ENCODE measurements at regions of chr9 and their contacts with region 1.

Region 1: DNA sequence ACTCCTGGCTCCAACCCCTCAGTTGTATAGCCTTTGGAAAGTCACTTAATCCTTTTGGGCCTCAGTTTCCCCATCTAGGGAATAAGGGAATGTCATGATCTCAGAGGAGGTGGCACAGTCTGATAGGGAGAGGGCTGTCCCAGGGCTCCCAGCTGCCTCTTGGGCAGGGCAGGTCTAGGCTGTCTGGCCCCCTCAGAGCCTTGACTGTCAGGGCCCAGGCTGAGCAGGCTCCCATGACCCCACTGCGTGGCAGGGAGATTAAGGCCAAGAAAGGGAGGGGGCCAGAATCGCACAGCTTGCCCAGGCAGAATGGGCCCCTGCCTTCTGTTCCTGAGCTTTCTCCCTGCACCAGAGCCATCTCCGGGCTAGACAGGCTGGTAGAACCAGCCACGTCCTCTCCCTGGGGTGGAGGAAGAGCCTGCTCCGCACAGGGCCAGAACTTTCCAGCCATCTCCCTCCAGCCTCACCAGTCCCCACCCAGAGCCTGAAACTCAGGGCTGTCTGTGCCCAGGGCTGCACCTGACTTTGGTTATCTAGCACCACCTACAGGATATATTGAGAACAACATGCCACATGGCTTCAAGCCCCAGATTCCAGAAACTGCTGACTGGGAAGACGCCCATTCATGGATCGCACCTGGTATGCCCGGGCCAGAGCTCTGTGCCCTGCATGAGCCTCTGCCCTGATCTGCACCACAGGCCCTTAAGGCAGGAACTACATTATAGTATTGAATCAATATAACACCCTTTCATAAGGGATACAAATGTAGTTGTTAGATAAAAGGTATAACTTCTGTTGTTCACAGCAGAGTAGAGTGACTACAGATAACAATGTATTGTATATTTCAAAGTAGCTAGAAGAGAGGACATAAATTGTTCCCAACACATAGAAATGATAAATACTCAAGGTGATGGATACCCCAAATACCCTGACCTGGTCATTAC is 32.0 kb downstream of the NAIF1 start:
- DNase-seq: peak; percentile 36 to 80 (median 75)
- H3K4me3 ChIP-seq: no peak overlapping the region
- H3K4me3 Mint-ChIP-seq: peak overlapping the region; percentile 35 to 66 (median 52)
- H3K27ac ChIP-seq: no peak overlapping the region
- H3K27ac Mint-ChIP-seq: peak overlapping the region; percentile 81 to 94 (median 87)
- H3K4me1 ChIP-seq: peaks cover 45% of the 10 kb centered on the region
- H3K4me1 Mint-ChIP-seq: peaks cover 31 to 43% (median 36%) of the 10 kb centered on the region in 3 donors
- H3K27me3 ChIP-seq: no peaks in the 10 kb centered on the region
- H3K27me3 Mint-ChIP-seq: no peaks in the 10 kb centered on the region

Region 2: DNA sequence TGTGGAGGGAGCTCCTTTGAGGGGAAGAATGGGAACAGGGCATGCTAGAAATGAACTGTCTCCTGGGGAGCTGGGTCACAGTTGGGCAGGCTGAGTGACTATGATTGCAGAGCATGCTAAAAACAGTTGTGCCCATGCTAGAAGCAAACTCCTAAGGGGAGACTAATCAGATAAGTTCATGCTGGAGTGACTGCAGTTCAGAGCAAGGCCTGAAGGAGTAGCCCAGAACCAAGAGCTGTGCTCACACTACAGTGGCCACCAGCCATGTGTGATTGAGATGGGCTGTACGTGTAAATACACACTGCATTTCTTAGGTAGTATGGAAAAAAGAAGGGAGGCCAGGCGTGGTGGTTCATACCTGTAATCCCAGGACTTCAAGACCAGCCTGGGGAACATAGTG is 147.3 kb before region 1 on chr9:
- CTCF ChIA-PET with region 1: no interaction called
- POLR2A ChIA-PET with region 1: no interaction called
- DNase-seq: no peak
- H3K4me3 ChIP-seq: no peak overlapping the region
- H3K4me3 Mint-ChIP-seq: no peak overlapping the region
- H3K27ac ChIP-seq: no peak overlapping the region
- H3K27ac Mint-ChIP-seq: peak overlapping the region in 2 of 8 donors; percentile 60 to 70
- H3K4me1 ChIP-seq: no peaks in the 10 kb centered on the region
- H3K4me1 Mint-ChIP-seq: peaks cover 9 to 39% (median 12%) of the 10 kb centered on the region in 3 donors
- H3K27me3 ChIP-seq: no peaks in the 10 kb centered on the region
- H3K27me3 Mint-ChIP-seq: peaks cover 0 to 1% of the 10 kb centered on the region in 2 donors

Region 3: GRCh38 chr9:127916665-127917613 is 118.2 kb before region 1 on chr9 and contains the start of gene ST6GALNAC4:
- CTCF ChIA-PET with region 1: interaction called, 16 read pairs
- POLR2A ChIA-PET with region 1: interaction called, 4 read pairs
- DNase-seq: peak; percentile 89 to 96 (median 94)
- H3K4me3 ChIP-seq: peak within 1 kb of the TSS; percentile 94
- H3K4me3 Mint-ChIP-seq: peak within 1 kb of the TSS; percentile 82 to 94 (median 89)
- H3K27ac ChIP-seq: peak within 1 kb of the TSS; percentile 81
- H3K27ac Mint-ChIP-seq: peak within 1 kb of the TSS; percentile 53 to 95 (median 93)
- H3K4me1 ChIP-seq: peaks cover 52% of the 10 kb centered on the region
- H3K4me1 Mint-ChIP-seq: peaks cover 40 to 66% (median 45%) of the 10 kb centered on the region in 3 donors
- H3K27me3 ChIP-seq: no peaks in the 10 kb centered on the region
- H3K27me3 Mint-ChIP-seq: peaks cover 0 to 7% of the 10 kb centered on the region in 2 donors
- total RNA-seq, gene ST6GALNAC4: 32.9 to 43.2 TPM

Region 4: DNA sequence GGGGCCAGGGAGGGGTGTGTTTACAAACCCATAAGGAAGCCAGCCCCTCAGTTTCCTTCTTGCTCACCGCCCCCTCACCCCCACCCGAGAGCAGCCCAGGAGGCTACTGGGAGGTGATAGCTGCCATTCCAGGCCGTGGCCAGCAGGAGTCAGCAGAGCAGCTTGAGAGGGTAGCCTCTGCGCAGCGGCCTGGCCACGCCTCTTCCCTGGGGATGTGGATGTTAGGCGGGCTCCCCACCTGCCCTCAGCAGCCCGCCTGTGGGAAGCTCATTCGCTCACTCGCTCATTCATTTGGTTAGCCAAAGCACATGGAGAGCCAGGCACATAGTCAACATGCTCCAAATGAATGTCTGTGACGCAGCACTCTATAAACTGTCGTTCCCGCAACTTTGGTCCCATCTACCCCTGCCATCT is 91.4 kb before region 1 on chr9:
- CTCF ChIA-PET with region 1: interaction called, 485 read pairs
- POLR2A ChIA-PET with region 1: interaction called, 6 read pairs
- DNase-seq: peak; percentile 62 to 82 (median 66)
- H3K4me3 ChIP-seq: no peak overlapping the region
- H3K4me3 Mint-ChIP-seq: peak overlapping the region in 3 of 7 donors; percentile 17 to 36 (median 18)
- H3K27ac ChIP-seq: no peak overlapping the region
- H3K27ac Mint-ChIP-seq: peak overlapping the region in 7 of 8 donors; percentile 30 to 83 (median 66)
- H3K4me1 ChIP-seq: peaks cover 32% of the 10 kb centered on the region
- H3K4me1 Mint-ChIP-seq: peaks cover 15 to 36% (median 21%) of the 10 kb centered on the region in 3 donors
- H3K27me3 ChIP-seq: no peaks in the 10 kb centered on the region
- H3K27me3 Mint-ChIP-seq: no peaks in the 10 kb centered on the region

Region 5: GRCh38 chr9:127970401-127971313 is 64.4 kb before region 1 on chr9:
- CTCF ChIA-PET with region 1: interaction called, 485 read pairs
- POLR2A ChIA-PET with region 1: interaction called, 11 read pairs
- DNase-seq: peak; percentile 36 to 84 (median 75)
- H3K4me3 ChIP-seq: peak overlapping the region; percentile 70
- H3K4me3 Mint-ChIP-seq: peak overlapping the region; percentile 85 to 99 (median 95)
- H3K27ac ChIP-seq: peak overlapping the region; percentile 55
- H3K27ac Mint-ChIP-seq: peak overlapping the region; percentile 87 to 100 (median 98)
- H3K4me1 ChIP-seq: peaks cover 99% of the 10 kb centered on the region
- H3K4me1 Mint-ChIP-seq: peaks cover 95 to 100% (median 100%) of the 10 kb centered on the region in 3 donors
- H3K27me3 ChIP-seq: no peaks in the 10 kb centered on the region
- H3K27me3 Mint-ChIP-seq: peaks cover 0 to 2% of the 10 kb centered on the region in 2 donors

Region 6: DNA sequence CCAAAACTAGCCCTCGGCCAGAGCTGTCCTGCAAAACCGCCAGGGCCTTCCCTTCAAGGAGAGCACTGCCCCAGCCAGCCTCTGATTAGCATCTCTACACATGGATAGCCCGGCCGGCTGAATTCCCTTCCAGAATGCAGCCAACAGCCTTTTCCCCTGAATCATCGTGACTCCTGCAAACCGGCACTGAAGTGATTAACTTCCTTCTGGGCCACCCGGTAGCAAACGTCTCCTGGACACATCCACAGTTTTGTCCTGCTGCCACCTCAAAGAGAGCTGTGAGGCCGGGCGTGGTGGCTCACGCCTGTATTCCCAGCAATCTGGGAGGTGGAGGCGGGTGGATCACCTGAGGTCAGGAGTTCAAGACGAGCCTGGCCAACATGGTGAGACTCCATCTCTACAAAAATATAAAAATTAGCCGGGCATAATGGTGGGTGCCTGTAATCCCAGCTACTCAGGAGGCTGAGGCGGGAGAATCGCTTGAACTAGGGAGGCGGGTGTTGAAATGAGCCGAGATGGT is 33.3 kb before region 1 on chr9:
- CTCF ChIA-PET with region 1: interaction called, 27 read pairs
- POLR2A ChIA-PET with region 1: interaction called, 5 read pairs
- DNase-seq: no peak
- H3K4me3 ChIP-seq: no peak overlapping the region
- H3K4me3 Mint-ChIP-seq: no peak overlapping the region
- H3K27ac ChIP-seq: peak overlapping the region; percentile 71
- H3K27ac Mint-ChIP-seq: peak overlapping the region in 1 of 8 donors; percentile 30
- H3K4me1 ChIP-seq: peaks cover 33% of the 10 kb centered on the region
- H3K4me1 Mint-ChIP-seq: peaks cover 16 to 51% (median 24%) of the 10 kb centered on the region in 3 donors
- H3K27me3 ChIP-seq: no peaks in the 10 kb centered on the region
- H3K27me3 Mint-ChIP-seq: no peaks in the 10 kb centered on the region

Region 7: DNA sequence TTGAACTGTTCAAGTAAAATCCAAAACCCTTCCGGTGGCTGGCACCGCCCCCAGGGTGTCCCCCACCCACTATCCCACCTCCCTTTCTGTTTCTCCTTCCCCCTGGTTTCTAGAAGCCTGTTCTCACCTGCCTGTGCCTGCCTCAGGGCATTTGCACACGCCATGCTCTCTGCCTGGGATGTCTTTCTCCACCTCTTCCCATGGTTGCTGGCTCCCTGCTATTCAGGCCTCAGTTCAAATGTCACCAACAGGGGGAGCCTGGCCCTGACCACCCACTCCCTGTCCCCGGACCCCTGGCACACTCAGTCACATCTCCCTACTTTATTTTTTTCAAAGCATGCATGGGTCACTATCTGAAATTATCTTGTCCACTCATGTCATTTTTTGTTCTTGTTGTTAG is 14.4 kb before region 1 on chr9:
- CTCF ChIA-PET with region 1: interaction called, 18 read pairs
- POLR2A ChIA-PET with region 1: interaction called, 10 read pairs
- DNase-seq: no peak
- H3K4me3 ChIP-seq: no peak overlapping the region
- H3K4me3 Mint-ChIP-seq: no peak overlapping the region
- H3K27ac ChIP-seq: no peak overlapping the region
- H3K27ac Mint-ChIP-seq: peak overlapping the region; percentile 77 to 98 (median 92)
- H3K4me1 ChIP-seq: peaks cover 53% of the 10 kb centered on the region
- H3K4me1 Mint-ChIP-seq: peaks cover 50 to 66% (median 52%) of the 10 kb centered on the region in 3 donors
- H3K27me3 ChIP-seq: no peaks in the 10 kb centered on the region
- H3K27me3 Mint-ChIP-seq: no peaks in the 10 kb centered on the region

Region 8: GRCh38 chr9:128091144-128091543 is 56.1 kb after region 1 on chr9:
- CTCF ChIA-PET with region 1: interaction called, 14 read pairs
- POLR2A ChIA-PET with region 1: no interaction called
- DNase-seq: no peak
- H3K4me3 ChIP-seq: no peak overlapping the region
- H3K4me3 Mint-ChIP-seq: peak overlapping the region in 1 of 7 donors; percentile 40
- H3K27ac ChIP-seq: no peak overlapping the region
- H3K27ac Mint-ChIP-seq: peak overlapping the region in 2 of 8 donors; percentile 26 to 68
- H3K4me1 ChIP-seq: peaks cover 77% of the 10 kb centered on the region
- H3K4me1 Mint-ChIP-seq: peaks cover 55 to 74% (median 62%) of the 10 kb centered on the region in 3 donors
- H3K27me3 ChIP-seq: no peaks in the 10 kb centered on the region
- H3K27me3 Mint-ChIP-seq: peaks cover 0 to 2% of the 10 kb centered on the region in 2 donors